ENCODE measurements at regions of chr17 and their contacts with region 1.

Region 1: DNA sequence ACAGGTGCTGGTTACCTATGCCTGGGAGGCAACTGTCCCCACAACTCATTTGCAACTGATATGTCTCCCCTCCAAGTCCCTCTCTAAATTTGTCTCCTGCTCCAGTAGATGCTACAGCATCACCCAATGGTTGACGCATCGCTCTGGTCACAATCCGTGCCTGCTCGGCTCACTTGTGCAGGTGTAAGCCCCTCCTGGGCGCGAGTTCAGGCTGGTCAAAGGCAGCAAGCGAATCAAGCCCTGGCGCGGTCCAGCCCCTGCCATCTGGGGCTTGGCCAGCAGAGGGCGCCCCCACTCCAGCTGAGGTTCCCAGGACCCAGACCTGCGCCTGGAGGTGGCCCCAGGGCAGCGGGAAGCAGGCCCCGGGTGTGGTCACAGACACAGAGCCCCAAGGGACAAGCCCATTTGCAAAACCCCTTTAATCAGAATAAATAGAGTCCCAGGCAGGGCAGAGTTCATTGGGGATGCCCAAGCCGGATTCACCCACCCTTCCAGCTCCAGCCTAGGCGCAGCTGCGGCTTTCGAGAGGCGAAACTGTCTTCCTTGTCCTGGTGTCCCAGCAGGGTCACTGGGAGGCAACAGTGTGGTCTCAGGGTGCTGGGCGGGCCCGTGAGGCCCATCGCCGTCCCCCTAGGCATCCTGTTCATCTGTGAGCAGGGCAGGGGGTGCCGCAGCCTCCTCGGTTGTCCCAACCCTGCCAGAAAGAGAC is 15.9 kb downstream of the TMC6 start:
- DNase-seq: peak; percentile 64 to 71 (median 71)
- H3K4me3 ChIP-seq: no peak overlapping the region
- H3K4me3 Mint-ChIP-seq: peak overlapping the region in 1 of 2 donors; percentile 30
- H3K27ac ChIP-seq: no peak overlapping the region
- H3K27ac Mint-ChIP-seq: peak overlapping the region in 5 of 7 donors; percentile 47 to 90 (median 70)
- H3K4me1 ChIP-seq: peaks cover 16 to 27% of the 10 kb centered on the region in 2 donors
- H3K4me1 Mint-ChIP-seq: peaks cover 28% of the 10 kb centered on the region
- H3K27me3 ChIP-seq: no peaks in the 10 kb centered on the region
- H3K27me3 Mint-ChIP-seq: peaks cover 0 to 5% (median 0%) of the 10 kb centered on the region in 3 donors
- CTCF ChIP-seq: peak; percentile 98

Region 2: DNA sequence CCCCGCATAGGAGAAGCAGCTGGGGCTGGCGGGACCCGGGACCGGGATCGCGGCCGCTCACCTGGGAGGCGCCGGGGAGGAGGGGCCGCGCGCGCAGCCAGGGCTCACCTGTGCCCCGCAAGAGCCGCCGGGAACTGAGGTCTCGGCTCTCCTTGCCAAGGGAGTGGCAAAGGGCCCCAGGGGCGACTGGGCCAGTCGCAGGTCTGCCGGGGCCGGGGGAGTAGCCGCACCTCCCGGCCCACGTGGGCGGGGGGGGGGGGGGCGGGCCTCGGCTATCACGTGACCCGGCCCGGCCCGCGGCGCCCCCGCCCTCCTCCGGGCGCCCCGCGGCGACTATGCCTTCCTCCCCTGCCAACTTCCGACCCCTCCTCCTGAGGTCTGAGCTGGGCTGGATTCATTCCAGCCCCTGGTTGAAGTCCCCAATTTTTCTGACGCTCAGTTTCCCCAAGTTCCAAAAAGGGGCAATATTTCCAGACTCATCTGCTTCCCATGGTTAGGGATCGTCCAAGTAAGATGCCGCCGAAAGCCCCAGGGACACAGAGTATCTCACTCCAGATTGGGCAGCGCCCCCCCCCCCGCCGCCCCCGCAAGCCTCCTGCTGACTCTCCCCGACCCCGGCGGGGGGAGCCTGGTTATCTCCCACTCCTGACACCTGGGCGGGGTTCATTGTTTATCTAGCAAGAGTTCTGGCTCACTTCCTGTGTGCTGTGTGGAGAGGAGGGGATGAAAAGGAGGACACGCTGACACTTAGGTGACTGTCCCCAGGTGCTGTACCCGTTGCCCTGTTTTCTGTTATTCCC is 16.1 kb after region 1 on chr17 and contains the start of gene TMC6:
- intact Hi-C with region 1: loop called in 1 of 2 experiments (anchors 2 kb)
- DNase-seq: peak in 2 of 3 donors; percentile 47 to 53
- H3K4me3 ChIP-seq: peak within 1 kb of the TSS; percentile 71 to 96 (median 95)
- H3K4me3 Mint-ChIP-seq: peak within 1 kb of the TSS; percentile 89 to 94
- H3K27ac ChIP-seq: peak within 1 kb of the TSS; percentile 85 to 93
- H3K27ac Mint-ChIP-seq: peak within 1 kb of the TSS; percentile 89 to 95 (median 93)
- H3K4me1 ChIP-seq: peaks cover 82 to 93% of the 10 kb centered on the region in 2 donors
- H3K4me1 Mint-ChIP-seq: peaks cover 71% of the 10 kb centered on the region
- H3K27me3 ChIP-seq: no peaks in the 10 kb centered on the region
- H3K27me3 Mint-ChIP-seq: peaks cover 0 to under 1% (median 0%) of the 10 kb centered on the region in 3 donors
- CTCF ChIP-seq: no peak
- polyA plus RNA-seq, gene TMC6: 60.1 to 107 (median 79.2) TPM

Region 3: DNA sequence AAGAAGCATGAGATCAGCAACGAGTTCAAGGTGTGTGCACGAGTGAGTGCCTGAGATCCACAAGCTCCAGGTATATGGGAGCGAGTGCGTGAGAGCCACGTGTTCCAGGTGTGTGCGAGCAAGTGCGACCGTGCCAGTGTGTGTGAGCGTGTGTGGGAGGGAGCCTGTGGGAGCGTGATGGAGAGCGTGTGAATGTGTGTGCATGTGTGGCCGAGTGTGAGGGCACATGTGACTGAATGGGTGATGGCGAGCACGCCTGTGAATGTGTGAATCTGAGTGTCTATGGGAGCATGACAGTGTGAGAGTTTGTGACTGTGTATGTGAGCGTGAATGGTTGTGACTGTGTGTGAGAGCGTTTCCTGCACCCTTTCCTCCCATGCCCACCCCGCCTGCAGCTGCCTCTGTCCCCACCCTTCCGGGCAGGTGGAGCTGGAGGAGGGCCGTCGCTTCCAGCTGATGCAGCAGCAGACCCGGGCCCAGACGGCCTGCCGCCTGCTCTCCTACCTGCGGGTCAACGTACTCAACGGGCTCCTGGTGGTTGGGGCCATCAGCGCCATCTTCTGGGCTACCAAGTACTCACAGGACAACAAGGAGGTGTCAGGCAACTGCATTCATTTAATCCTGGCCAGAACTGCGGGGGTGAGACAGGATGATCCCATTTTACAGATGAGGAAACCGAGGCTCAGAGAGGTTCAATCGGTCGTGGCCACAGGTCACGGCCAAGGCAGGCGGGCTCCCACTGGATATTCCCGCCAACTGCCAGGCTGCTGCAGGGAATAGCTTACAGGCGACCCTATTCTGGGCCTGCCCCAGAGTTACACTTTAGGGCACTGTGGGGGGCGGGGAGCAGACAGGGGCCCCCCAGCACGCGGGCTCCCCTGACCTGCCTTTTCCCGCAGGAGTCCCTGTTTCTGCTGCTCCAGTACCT is 21.6 kb after region 1 on chr17:
- intact Hi-C with region 1: loop called in 1 of 2 experiments (anchors 2 kb)
- DNase-seq: peak; percentile 48 to 62 (median 55)
- H3K4me3 ChIP-seq: peak overlapping the region in 1 of 3 experiments; percentile 96
- H3K4me3 Mint-ChIP-seq: peak overlapping the region; percentile 62 to 69
- H3K27ac ChIP-seq: no peak overlapping the region
- H3K27ac Mint-ChIP-seq: peak overlapping the region in 1 of 7 donors; percentile 54
- H3K4me1 ChIP-seq: peaks cover 71 to 94% of the 10 kb centered on the region in 2 donors
- H3K4me1 Mint-ChIP-seq: peaks cover 80% of the 10 kb centered on the region
- H3K27me3 ChIP-seq: no peaks in the 10 kb centered on the region
- H3K27me3 Mint-ChIP-seq: peaks cover 0 to 5% (median 0%) of the 10 kb centered on the region in 3 donors
- CTCF ChIP-seq: peak; percentile 80